ENCODE measurements at regions of chr14 and their contacts with region 1.

Region 1: GRCh38 chr14:21263656-21264411 is 5.4 kb downstream of the HNRNPC start:
- DNase-seq: peak in 1 of 2 experiments; percentile 19
- H3K4me3 ChIP-seq: peak overlapping the region in 1 of 4 experiments; percentile 99; a peak in 2 of 8 replicates
- H3K27ac ChIP-seq: no peak overlapping the region
- H3K4me1 ChIP-seq: peaks cover 3 to 7% (median 5%) of the 10 kb centered on the region in 4 experiments; a peak in 5 of 7 replicates
- H3K27me3 ChIP-seq: no peaks in the 10 kb centered on the region
- CTCF ChIP-seq: no peak
- EP300 ChIP-seq: no peak
- POLR2A ChIP-seq: peak; percentile 23 to 91
- RAD21 ChIP-seq: no peak

Region 2: GRCh38 chr14:21227981-21228380 is 35.9 kb before region 1 on chr14:
- CTCF ChIA-PET with region 1: interaction called, 5 read pairs
- POLR2A ChIA-PET with region 1: interaction called, 25 read pairs
- DNase-seq: no peak
- H3K4me3 ChIP-seq: no peak overlapping the region
- H3K27ac ChIP-seq: no peak overlapping the region
- H3K4me1 ChIP-seq: no peaks in the 10 kb centered on the region
- H3K27me3 ChIP-seq: no peaks in the 10 kb centered on the region
- CTCF ChIP-seq: no peak
- EP300 ChIP-seq: no peak
- POLR2A ChIP-seq: no peak
- RAD21 ChIP-seq: no peak

Region 3: GRCh38 chr14:21233457-21234076 is 30.3 kb before region 1 on chr14:
- CTCF ChIA-PET with region 1: interaction called, 5 read pairs
- POLR2A ChIA-PET with region 1: interaction called, 836 read pairs
- DNase-seq: no peak
- H3K4me3 ChIP-seq: no peak overlapping the region
- H3K27ac ChIP-seq: no peak overlapping the region
- H3K4me1 ChIP-seq: no peaks in the 10 kb centered on the region
- H3K27me3 ChIP-seq: no peaks in the 10 kb centered on the region
- CTCF ChIP-seq: peak; percentile 27 to 55 (median 52); a peak in 3 of 4 replicates
- EP300 ChIP-seq: no peak
- POLR2A ChIP-seq: no peak
- RAD21 ChIP-seq: peak; percentile 36 to 39; a peak in 2 of 4 replicates

Region 4: DNA sequence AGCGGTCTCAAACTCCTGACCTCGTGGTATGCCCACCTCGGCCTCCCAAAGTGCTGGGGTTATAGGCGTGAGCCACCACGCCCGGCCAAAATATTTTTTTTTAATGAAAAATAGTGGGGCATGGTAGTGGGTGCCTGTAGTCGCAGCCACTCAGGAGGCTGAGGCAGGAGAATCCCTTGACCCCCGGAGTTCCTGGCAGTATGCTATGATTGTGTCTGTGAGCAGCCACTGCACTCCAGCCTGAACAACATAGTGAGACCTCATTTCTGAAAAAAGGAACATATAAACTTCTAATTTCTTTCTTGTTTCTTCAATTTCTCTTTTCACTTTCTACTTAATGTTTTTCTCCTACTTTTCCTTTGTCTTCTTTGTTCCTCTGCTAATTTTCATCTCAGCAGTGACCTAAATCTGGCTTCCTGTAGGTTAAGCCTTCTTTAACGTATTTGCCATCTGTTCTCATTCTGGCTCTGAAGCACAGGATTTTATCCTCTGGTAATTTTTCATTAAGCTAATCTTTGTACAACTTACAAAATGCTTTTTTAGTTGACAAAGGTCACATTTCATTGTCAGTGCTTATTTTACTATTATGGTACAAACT is 11.5 kb after region 1 on chr14:
- CTCF ChIA-PET with region 1: no interaction called
- POLR2A ChIA-PET with region 1: interaction called, 117 read pairs
- DNase-seq: no peak
- H3K4me3 ChIP-seq: no peak overlapping the region
- H3K27ac ChIP-seq: no peak overlapping the region
- H3K4me1 ChIP-seq: no peaks in the 10 kb centered on the region
- H3K27me3 ChIP-seq: no peaks in the 10 kb centered on the region
- CTCF ChIP-seq: no peak
- EP300 ChIP-seq: no peak
- POLR2A ChIP-seq: no peak
- RAD21 ChIP-seq: no peak

Region 5: DNA sequence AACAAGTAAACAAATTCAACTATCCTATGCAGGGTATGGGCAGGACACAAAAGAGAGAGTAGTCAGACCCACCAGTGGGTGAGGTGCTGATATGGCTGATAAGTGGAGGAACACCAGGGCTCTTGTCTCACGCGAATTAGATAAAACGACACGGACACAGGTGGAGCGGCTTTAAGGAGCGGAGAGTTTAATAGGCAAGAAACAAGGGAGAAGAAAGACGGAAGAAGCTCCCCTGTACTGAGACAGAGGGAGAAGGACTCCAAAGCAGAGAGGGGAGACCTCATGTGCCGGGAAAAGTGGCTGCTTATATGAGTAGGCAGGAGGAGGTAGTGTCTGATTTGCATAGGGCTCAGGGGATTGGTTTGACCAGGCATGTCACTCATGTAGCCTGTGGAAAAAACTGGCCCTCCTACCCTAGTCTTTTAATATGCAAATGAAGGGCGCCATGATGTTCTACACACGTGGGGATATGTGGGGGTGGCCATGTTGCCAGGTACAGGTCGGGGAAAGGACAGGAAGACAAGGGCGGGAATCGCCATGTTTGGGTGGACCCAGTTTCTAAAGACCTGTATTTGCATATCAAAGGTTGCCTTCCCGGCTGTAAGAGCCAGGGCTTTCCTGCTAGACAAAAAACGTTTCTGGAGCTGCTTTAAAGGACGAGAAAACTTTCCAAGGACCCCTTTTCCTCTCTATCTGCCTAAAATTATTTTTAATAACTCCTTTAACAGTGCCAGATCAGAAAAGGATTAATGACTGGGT is 44.8 kb after region 1 on chr14:
- CTCF ChIA-PET with region 1: no interaction called
- POLR2A ChIA-PET with region 1: interaction called, 44 read pairs
- DNase-seq: peak; percentile 79 to 92
- H3K4me3 ChIP-seq: peak overlapping the region; percentile 46 to 65 (median 50); a peak in 7 of 8 replicates
- H3K27ac ChIP-seq: peak overlapping the region; percentile 94
- H3K4me1 ChIP-seq: peaks cover 2 to 9% (median 4%) of the 10 kb centered on the region in 4 experiments; a peak in 4 of 7 replicates
- H3K27me3 ChIP-seq: no peaks in the 10 kb centered on the region
- CTCF ChIP-seq: no peak
- EP300 ChIP-seq: no peak
- POLR2A ChIP-seq: peak; percentile 97
- RAD21 ChIP-seq: no peak

Region 6: GRCh38 chr14:21326972-21327371 is 63.1 kb after region 1 on chr14:
- CTCF ChIA-PET with region 1: no interaction called
- POLR2A ChIA-PET with region 1: interaction called, 11 read pairs
- DNase-seq: no peak
- H3K4me3 ChIP-seq: no peak overlapping the region
- H3K27ac ChIP-seq: no peak overlapping the region
- H3K4me1 ChIP-seq: no peaks in the 10 kb centered on the region
- H3K27me3 ChIP-seq: no peaks in the 10 kb centered on the region
- CTCF ChIP-seq: peak in 1 of 3 experiments; percentile 31; a peak in 1 of 4 replicates
- EP300 ChIP-seq: no peak
- POLR2A ChIP-seq: no peak
- RAD21 ChIP-seq: peak; percentile 27 to 33; a peak in 2 of 4 replicates

Region 7: GRCh38 chr14:21383848-21384493 is 120.1 kb after region 1 on chr14 and contains the start of gene SUPT16H:
- CTCF ChIA-PET with region 1: no interaction called
- POLR2A ChIA-PET with region 1: interaction called, 15 read pairs
- DNase-seq: peak; percentile 92
- H3K4me3 ChIP-seq: peak within 1 kb of the TSS; percentile 98 to 100 (median 99)
- H3K27ac ChIP-seq: peak within 1 kb of the TSS; percentile 94
- H3K4me1 ChIP-seq: peaks cover 0 to 3% (median 0%) of the 10 kb centered on the region in 4 experiments; a peak in 3 of 7 replicates
- H3K27me3 ChIP-seq: no peaks in the 10 kb centered on the region
- CTCF ChIP-seq: no peak
- EP300 ChIP-seq: peak in 1 of 2 experiments; percentile 7; a peak in 1 of 3 replicates
- POLR2A ChIP-seq: peak; percentile 74 to 94
- RAD21 ChIP-seq: no peak
- total RNA-seq, gene SUPT16H: 201 and 209 TPM in 2 replicates